Activated B cell treated with CpG ODN at 0.5 μM for 24 hours (primary cell): ENCODE measurements at regions of chr5 and their contacts with region 1.

Region 1: GRCh38 chr5:91419571-91420537 is 36.7 kb upstream of the ARRDC3 start:
- DNase-seq: peak; percentile 21
- ATAC-seq: no peak
- H3K4me3 Mint-ChIP-seq: no peak overlapping the region
- H3K27ac Mint-ChIP-seq: no peak overlapping the region
- H3K4me1 Mint-ChIP-seq: no peaks in the 10 kb centered on the region
- H3K27me3 Mint-ChIP-seq: no peaks in the 10 kb centered on the region
- CTCF ChIP-seq: peak; percentile 38

Region 2: DNA sequence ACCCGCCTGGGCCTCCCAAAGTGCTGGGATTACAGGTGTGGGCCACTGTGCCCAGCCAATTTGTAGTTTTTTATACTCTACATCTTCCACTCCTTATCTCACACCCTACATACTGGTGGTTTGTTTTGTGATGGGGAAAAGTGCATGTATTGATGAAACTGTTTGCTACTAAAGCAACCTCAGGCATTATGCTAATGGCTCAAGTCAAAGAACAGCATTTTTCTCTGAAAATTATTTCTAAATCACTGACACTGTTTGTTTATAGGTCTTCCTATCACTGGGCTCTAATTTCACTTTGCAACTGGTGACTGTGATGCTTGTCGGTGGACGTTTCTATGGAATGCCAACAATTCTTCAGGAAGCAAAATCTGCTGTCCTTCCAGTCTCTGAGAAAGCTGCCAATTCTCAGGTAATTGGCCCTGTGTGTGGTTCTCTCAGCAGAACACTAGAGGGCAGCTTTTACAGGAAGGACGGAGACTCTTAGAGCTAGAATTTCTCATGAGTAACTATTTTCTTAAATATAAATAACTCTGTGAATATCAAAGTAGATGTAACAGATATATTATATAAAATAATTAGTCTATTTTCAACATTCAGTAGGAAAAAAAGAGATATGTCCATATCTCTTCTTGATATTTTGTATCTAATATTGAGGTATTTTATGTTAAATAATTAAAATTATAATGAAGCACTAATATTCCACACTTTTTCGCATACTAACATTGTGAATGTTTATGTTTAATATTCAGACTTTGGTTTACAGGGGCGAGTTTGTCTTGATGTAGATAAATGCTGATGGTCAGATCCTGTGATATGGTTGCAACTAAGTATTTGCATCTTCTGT is 617.2 kb before region 1 on chr5:
- CTCF ChIA-PET with region 1: no interaction called
- POLR2A ChIA-PET with region 1: no interaction called
- intact Hi-C with region 1: loop called (anchors 5 kb)
- DNase-seq: no peak
- ATAC-seq: no peak
- H3K4me3 Mint-ChIP-seq: no peak overlapping the region
- H3K27ac Mint-ChIP-seq: no peak overlapping the region
- H3K4me1 Mint-ChIP-seq: no peaks in the 10 kb centered on the region
- H3K27me3 Mint-ChIP-seq: no peaks in the 10 kb centered on the region
- CTCF ChIP-seq: no peak

Region 3: DNA sequence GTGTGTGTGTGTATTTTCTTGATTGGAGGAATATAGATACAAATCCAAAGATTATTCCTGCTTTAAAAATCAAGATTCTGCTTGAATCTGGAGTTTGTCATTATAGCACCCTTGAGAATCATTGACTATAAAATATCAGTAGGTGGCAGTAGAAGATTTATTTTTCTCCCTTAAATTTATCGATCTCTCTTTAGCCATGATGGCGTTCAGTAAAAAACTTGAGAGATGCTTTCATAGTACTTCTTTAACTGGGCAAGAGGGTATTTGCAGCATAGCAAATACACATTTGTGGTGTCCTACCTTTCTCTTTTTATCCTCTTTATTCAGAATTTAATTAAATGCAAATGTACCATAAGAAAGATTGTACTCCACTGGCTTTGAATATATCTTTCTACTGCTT is 553.5 kb before region 1 on chr5:
- CTCF ChIA-PET with region 1: interaction called, 179 read pairs
- POLR2A ChIA-PET with region 1: no interaction called
- intact Hi-C with region 1: loop called (anchors 1 kb)
- DNase-seq: no peak
- ATAC-seq: peak; percentile 37
- H3K4me3 Mint-ChIP-seq: no peak overlapping the region
- H3K27ac Mint-ChIP-seq: no peak overlapping the region
- H3K4me1 Mint-ChIP-seq: peaks cover 2% of the 10 kb centered on the region
- H3K27me3 Mint-ChIP-seq: no peaks in the 10 kb centered on the region
- CTCF ChIP-seq: no peak

Region 4: GRCh38 chr5:90932052-90932699 is 487.7 kb before region 1 on chr5:
- CTCF ChIA-PET with region 1: interaction called, 49 read pairs
- POLR2A ChIA-PET with region 1: no interaction called
- intact Hi-C with region 1: loop called (anchors 1 kb)
- DNase-seq: no peak
- ATAC-seq: no peak
- H3K4me3 Mint-ChIP-seq: no peak overlapping the region
- H3K27ac Mint-ChIP-seq: no peak overlapping the region
- H3K4me1 Mint-ChIP-seq: no peaks in the 10 kb centered on the region
- H3K27me3 Mint-ChIP-seq: no peaks in the 10 kb centered on the region
- CTCF ChIP-seq: no peak

Region 5: DNA sequence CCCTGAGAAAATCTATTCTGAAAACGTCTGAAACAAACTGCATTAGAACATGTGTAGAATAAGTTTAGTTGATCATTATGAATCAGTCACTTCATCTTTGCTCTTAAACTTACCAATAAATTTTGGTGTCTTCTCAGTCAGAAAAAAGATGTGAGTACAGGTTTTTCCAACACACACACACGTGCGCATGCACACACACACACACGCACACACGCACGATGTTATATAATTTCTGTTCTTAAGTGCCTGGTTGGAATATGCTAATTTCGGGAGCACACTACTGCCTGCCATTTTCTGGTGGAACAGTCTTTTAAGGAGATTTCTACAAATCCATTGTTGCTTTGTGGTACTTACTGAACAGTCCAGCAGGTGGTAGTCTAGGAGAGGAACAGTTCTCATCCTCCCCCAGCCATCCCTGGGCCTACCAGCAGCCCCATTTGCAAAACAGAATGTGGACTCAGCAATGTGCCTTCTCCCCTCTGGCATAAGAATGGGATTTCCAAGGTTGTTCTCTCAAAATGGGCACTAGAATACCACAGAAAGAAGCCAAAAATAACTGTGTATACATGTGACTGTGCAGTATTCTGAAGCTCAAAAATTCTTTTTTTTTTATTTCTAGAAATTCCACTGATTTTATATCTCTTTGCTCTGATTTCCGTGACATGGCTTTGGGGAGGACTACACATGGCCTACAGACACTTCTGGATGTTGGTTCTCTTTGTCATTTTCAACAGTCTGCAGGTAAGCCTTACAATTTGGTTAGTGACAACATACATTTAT is 318.1 kb before region 1 on chr5:
- CTCF ChIA-PET with region 1: interaction called, 36 read pairs
- POLR2A ChIA-PET with region 1: no interaction called
- intact Hi-C with region 1: loop called (anchors 1 kb)
- DNase-seq: no peak
- ATAC-seq: peak; percentile 92
- H3K4me3 Mint-ChIP-seq: no peak overlapping the region
- H3K27ac Mint-ChIP-seq: no peak overlapping the region
- H3K4me1 Mint-ChIP-seq: no peaks in the 10 kb centered on the region
- H3K27me3 Mint-ChIP-seq: no peaks in the 10 kb centered on the region
- CTCF ChIP-seq: no peak